ENCODE measurements at regions of chr3 and their contacts with region 1.

Region 1: DNA sequence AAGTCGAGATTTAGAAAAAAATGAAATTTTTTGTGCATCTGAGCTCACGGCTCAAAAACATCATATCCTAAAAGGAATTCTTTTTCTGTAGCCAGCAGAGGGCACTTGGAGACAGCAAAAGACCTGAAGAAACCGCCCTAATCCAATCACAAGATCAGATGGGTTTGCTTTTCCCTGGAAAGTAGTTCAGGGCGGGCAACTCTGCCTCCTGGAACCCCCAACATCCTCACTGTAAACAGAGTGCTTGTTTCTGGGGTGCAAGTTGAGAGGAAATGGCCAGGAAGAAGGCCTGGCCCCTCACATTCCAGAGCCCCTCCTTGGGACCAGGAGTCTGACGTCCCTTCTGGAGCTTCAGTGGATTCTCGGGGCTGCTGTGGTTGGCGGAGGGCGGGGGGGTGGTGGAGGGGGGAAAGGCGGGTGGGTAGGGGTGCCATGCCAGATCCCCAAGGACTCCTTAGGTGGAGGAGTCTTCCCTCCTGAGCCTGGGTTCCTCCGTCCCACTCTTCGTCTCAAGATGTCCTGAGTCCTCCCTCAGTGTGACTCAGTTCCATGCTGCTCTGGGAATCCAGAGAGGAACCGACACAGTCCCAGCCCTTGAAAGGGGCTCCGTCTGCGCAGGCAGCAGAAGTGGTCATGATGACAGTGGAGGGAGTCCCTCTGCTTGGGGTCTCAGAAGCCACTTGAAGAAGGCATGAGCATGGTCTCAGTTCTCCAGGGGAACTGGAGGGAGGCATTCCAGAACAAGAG is 35.9 kb downstream of the CCK start:
- DNase-seq: peak; percentile 34
- ATAC-seq: peak; percentile 74
- H3K4me3 ChIP-seq: no peak overlapping the region
- H3K27ac ChIP-seq: no peak overlapping the region
- H3K4me1 ChIP-seq: peaks cover 0 to 5% of the 10 kb centered on the region in 2 experiments; a peak in 1 of 4 replicates
- H3K27me3 ChIP-seq: no peaks in the 10 kb centered on the region
- CTCF ChIP-seq: peak; percentile 54 to 87 (median 74)
- POLR2A ChIP-seq: no peak
- RAD21 ChIP-seq: peak; percentile 91

Region 2: DNA sequence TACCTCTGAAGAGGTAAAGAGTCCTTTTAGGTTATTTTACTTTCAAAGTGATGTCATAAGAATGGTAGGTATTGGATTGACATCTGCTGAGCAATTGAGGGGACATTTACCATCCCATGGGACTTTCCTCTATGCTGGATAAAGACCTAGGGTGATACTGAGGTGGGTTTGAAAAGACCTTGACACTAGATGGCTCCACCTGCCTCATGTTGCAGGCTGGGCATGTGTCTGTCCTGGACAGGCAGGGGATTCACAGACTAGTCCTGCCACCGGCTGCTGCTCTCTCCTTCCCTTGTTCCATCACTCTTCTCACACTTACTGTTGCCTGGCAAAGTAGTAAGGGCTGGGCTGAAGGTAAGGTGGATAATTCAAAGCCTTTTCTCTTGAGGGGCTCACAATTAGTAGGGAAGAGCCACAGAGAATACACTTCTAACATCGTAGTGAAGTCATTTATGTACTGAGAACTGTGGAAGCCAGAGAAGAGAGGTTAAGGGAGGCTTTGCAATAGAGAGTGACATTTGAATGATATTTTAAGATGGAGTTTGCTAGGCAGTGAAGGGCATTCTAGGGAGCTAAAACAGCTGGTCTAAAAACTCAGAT is 111.3 kb before region 1 on chr3:
- CTCF ChIA-PET with region 1: interaction called, 22 read pairs
- POLR2A ChIA-PET with region 1: no interaction called
- RAD21 ChIA-PET with region 1: interaction called, 3 to 7 read pairs
- intact Hi-C with region 1: loop called (anchors 1 kb)
- DNase-seq: peak; percentile 47
- ATAC-seq: peak; percentile 86
- H3K4me3 ChIP-seq: no peak overlapping the region
- H3K27ac ChIP-seq: no peak overlapping the region
- H3K4me1 ChIP-seq: peaks cover 40 to 51% of the 10 kb centered on the region in 2 experiments
- H3K27me3 ChIP-seq: no peaks in the 10 kb centered on the region
- CTCF ChIP-seq: peak; percentile 66 to 79 (median 67); a peak in 5 of 6 replicates
- POLR2A ChIP-seq: no peak
- RAD21 ChIP-seq: peak; percentile 84

Region 3: GRCh38 chr3:42247576-42248027 is 17.5 kb after region 1 on chr3:
- CTCF ChIA-PET with region 1: interaction called, 24 read pairs
- POLR2A ChIA-PET with region 1: no interaction called
- RAD21 ChIA-PET with region 1: interaction called in 1 of 2 experiments, 3 read pairs
- intact Hi-C with region 1: no loop called
- DNase-seq: peak; percentile 60
- ATAC-seq: peak; percentile 88
- H3K4me3 ChIP-seq: no peak overlapping the region
- H3K27ac ChIP-seq: no peak overlapping the region
- H3K4me1 ChIP-seq: peaks cover 0 to 5% of the 10 kb centered on the region in 2 experiments; a peak in 1 of 4 replicates
- H3K27me3 ChIP-seq: peaks cover 8% of the 10 kb centered on the region; the same call in 1 of the 2 replicates
- CTCF ChIP-seq: peak; percentile 63 to 93 (median 88)
- POLR2A ChIP-seq: no peak
- RAD21 ChIP-seq: peak; percentile 95

Region 4: GRCh38 chr3:42539869-42540714 is 310.0 kb after region 1 on chr3:
- CTCF ChIA-PET with region 1: interaction called, 24 read pairs
- POLR2A ChIA-PET with region 1: no interaction called
- RAD21 ChIA-PET with region 1: interaction called in 1 of 2 experiments, 3 read pairs
- intact Hi-C with region 1: loop called (anchors 1 kb)
- DNase-seq: peak; percentile 55
- ATAC-seq: peak; percentile 91
- H3K4me3 ChIP-seq: no peak overlapping the region
- H3K27ac ChIP-seq: no peak overlapping the region
- H3K4me1 ChIP-seq: peaks cover 0 to 9% of the 10 kb centered on the region in 2 experiments; a peak in 1 of 4 replicates
- H3K27me3 ChIP-seq: no peaks in the 10 kb centered on the region
- CTCF ChIP-seq: peak; percentile 68 to 92 (median 81); a peak in 5 of 6 replicates
- POLR2A ChIP-seq: no peak
- RAD21 ChIP-seq: peak; percentile 69

Region 5: DNA sequence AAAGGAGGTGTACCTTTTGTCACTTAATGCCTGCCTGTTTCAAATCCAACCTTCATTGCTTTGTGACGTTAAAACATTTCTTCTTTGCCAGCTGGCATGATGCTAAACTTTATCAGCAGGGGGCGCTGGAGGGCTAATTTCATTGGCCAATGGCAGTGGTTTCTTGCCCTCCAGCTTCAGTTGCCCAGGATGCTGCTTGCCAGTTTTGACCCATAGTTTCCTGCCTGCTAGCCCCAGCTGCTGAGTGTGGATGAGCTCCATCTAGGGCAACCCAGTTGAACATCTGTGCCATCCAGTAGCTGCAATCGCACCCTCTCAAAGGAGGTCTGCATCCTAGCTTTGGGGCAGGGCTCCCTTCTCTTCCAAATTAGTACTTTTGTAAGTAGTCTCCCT is 601.2 kb after region 1 on chr3:
- CTCF ChIA-PET with region 1: interaction called, 6 read pairs
- POLR2A ChIA-PET with region 1: no interaction called
- RAD21 ChIA-PET with region 1: no interaction called
- intact Hi-C with region 1: loop called (anchors 2 kb)
- DNase-seq: peak; percentile 65
- ATAC-seq: peak; percentile 86
- H3K4me3 ChIP-seq: no peak overlapping the region
- H3K27ac ChIP-seq: no peak overlapping the region
- H3K4me1 ChIP-seq: peaks cover 3 to 29% of the 10 kb centered on the region in 2 experiments
- H3K27me3 ChIP-seq: no peaks in the 10 kb centered on the region
- CTCF ChIP-seq: peak; percentile 76 to 90 (median 84); a peak in 5 of 6 replicates
- POLR2A ChIP-seq: no peak
- RAD21 ChIP-seq: peak; percentile 71